Vagina (tissue), 2 donors: ENCODE measurements at regions of chr4 and their contacts with region 1.

Region 1: GRCh38 chr4:13498469-13498868 is 14.3 kb upstream of the RAB28 start:
- DNase-seq: no peak
- H3K4me3 ChIP-seq: no peak overlapping the region
- H3K27ac ChIP-seq: no peak overlapping the region
- H3K4me1 ChIP-seq: no peaks in the 10 kb centered on the region
- H3K27me3 ChIP-seq: no peaks in the 10 kb centered on the region
- CTCF ChIP-seq: no peak
- POLR2A ChIP-seq: no peak

Region 2: GRCh38 chr4:13202701-13203100 is 295.8 kb before region 1 on chr4:
- intact Hi-C with region 1: loop called (anchors 5 kb)
- DNase-seq: no peak
- H3K4me3 ChIP-seq: no peak overlapping the region
- H3K27ac ChIP-seq: no peak overlapping the region
- H3K4me1 ChIP-seq: no peaks in the 10 kb centered on the region
- H3K27me3 ChIP-seq: no peaks in the 10 kb centered on the region
- CTCF ChIP-seq: no peak
- POLR2A ChIP-seq: no peak

Region 3: GRCh38 chr4:13260513-13260912 is 238.0 kb before region 1 on chr4:
- intact Hi-C with region 1: no loop called
- DNase-seq: no peak
- H3K4me3 ChIP-seq: no peak overlapping the region
- H3K27ac ChIP-seq: no peak overlapping the region
- H3K4me1 ChIP-seq: no peaks in the 10 kb centered on the region
- H3K27me3 ChIP-seq: no peaks in the 10 kb centered on the region
- CTCF ChIP-seq: no peak
- POLR2A ChIP-seq: no peak

Region 4: DNA sequence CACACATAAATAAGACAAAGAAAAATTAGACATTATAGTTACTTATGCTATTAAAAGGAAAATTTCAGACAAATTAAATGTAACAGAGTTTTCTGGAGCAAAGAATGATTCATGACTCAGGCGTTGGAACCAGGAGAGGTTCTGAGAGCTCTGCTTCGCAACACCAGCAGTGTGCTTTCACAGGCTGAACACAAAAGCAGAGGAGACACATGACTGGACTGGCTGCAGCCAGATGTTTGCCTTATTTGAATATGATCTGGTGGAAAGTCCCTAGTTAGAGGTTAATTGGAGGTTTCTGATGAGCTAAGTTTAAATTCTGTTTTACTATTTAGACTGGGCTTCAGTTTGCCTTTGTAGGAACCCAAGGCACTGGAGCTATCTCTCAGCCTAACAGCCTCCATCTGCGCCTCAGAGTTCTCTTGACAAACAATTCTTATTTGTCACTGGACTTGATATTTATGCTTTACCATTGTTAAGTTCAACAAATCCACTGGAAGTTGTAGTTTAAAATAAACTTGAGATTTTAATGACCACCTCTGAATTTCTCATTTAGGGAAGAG is 112.9 kb after region 1 on chr4:
- intact Hi-C with region 1: no loop called
- DNase-seq: no peak
- H3K4me3 ChIP-seq: no peak overlapping the region
- H3K27ac ChIP-seq: no peak overlapping the region
- H3K4me1 ChIP-seq: no peaks in the 10 kb centered on the region
- H3K27me3 ChIP-seq: no peaks in the 10 kb centered on the region
- CTCF ChIP-seq: no peak
- POLR2A ChIP-seq: no peak

Region 5: GRCh38 chr4:14264437-14264836 is 766.0 kb after region 1 on chr4:
- intact Hi-C with region 1: no loop called
- DNase-seq: no peak
- H3K4me3 ChIP-seq: no peak overlapping the region
- H3K27ac ChIP-seq: no peak overlapping the region
- H3K4me1 ChIP-seq: no peaks in the 10 kb centered on the region
- H3K27me3 ChIP-seq: no peaks in the 10 kb centered on the region
- CTCF ChIP-seq: no peak
- POLR2A ChIP-seq: no peak